Activated CD4-positive, alpha-beta memory T cell treated with anti-CD3 and anti-CD28 coated beads, Interleukin-2, amount 10 ng/mL, durations not matched to agents 7 days and 5 days (primary cell): ENCODE measurements at regions of chr9 and their contacts with region 1.

Region 1: DNA sequence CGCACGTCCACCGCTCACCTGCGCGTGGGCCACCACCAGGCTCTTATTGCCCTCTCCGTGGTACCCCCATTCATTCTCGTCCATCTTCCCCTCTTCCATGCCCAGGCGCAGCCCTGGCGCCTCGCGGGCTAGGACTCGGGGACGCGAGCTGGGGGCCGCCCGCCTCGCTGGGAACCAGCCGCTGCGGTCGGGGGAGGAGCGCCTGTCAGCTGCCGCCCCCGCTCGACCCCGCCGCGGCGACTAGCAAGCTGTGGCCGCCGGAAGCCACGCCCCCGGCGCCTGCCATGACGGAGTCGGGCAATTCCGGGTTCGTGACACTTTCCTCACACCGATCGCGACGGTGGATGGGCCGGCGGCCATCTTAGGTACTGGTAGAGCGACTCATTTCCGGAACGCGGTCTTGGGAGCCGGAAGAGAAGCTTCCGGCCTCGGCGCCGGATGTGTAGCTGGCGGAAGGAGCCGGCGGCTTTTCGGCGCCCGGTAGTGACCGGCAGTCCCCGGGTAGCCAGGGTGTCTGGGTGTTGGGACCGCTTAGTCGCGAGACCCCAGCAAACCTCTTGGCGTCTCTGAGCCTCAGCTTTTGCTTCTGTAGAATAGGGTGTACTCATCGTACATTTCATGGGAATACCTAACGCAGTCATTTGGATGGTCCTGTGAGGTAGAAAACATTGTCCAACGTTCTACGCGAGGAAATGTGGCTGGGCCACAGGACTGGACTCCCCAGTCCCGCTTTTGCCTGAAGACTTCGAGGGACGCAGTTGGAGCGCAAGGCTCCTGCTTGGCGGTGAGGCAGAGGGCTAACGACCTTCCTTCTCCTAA is at the start of gene IPPK:
- DNase-seq: peak; percentile 98
- H3K4me3 Mint-ChIP-seq: peak within 1 kb of the TSS; percentile 96
- H3K27ac Mint-ChIP-seq: peak within 1 kb of the TSS; percentile 93
- H3K4me1 Mint-ChIP-seq: peaks cover 39% of the 10 kb centered on the region
- H3K27me3 Mint-ChIP-seq: no peaks in the 10 kb centered on the region
- total RNA-seq, gene IPPK: 11.4 to 11.5 TPM

Region 2: GRCh38 chr9:92764988-92765936 is 95.2 kb after region 1 on chr9:
- CTCF ChIA-PET with region 1: interaction called, 5 read pairs
- POLR2A ChIA-PET with region 1: interaction called, 18 read pairs
- DNase-seq: peak; percentile 99
- H3K4me3 Mint-ChIP-seq: peak overlapping the region; percentile 81
- H3K27ac Mint-ChIP-seq: peak overlapping the region; percentile 93
- H3K4me1 Mint-ChIP-seq: peaks cover 51% of the 10 kb centered on the region
- H3K27me3 Mint-ChIP-seq: no peaks in the 10 kb centered on the region